ENCODE measurements at regions of chr3 and their contacts with region 1.

Region 1: DNA sequence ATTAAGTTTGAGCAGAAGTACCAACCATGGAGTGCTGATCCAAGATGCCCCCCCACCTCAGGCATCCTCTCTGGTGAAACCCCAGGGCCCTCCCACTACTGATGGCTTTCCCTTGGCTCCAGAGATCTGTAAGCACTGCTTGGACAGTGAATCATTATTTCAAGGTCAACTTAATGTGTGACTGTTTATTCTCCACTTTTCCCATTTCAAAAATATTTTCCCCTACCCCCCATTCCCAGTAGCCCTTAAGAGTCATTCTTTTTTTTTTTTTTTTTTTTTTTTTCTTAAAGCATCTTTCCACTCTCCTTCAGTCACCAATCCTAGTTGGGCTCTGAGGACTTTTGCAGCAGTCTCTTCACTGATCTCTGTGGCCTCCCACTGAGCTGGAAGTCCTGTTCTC is 82.6 kb downstream of the PCCB start:
- DNase-seq: no peak
- H3K4me3 ChIP-seq: no peak overlapping the region
- H3K27ac ChIP-seq: peak overlapping the region in 1 of 4 donors; percentile 3
- H3K4me1 ChIP-seq: peaks cover 0 to 4% (median 0%) of the 10 kb centered on the region in 4 donors
- H3K27me3 ChIP-seq: no peaks in the 10 kb centered on the region
- CTCF ChIP-seq: no peak
- EP300 ChIP-seq: no peak
- POLR2A ChIP-seq: no peak

Region 2: DNA sequence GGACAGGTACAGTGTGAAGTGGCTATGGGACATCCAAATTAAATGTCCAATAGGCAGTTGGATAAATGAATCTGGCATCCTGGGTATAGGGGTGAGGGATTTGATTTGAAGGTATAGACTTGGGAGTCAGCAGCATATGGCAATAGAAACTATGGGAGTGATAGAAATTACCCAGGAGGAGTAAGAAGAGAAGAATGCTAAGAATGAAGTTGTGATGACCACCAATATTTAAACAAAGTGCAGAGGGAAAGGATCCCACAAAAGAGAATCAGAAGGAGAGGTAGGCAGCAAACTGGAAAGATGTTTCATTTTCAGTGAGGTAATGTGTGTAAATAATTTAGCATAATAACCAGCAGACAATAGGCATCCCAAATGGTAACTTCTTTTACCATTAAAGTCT is 122.9 kb before region 1 on chr3:
- intact Hi-C with region 1: loop called (anchors 10 kb)
- DNase-seq: no peak
- H3K4me3 ChIP-seq: no peak overlapping the region
- H3K27ac ChIP-seq: no peak overlapping the region
- H3K4me1 ChIP-seq: no peaks in the 10 kb centered on the region
- H3K27me3 ChIP-seq: no peaks in the 10 kb centered on the region
- CTCF ChIP-seq: no peak
- EP300 ChIP-seq: no peak
- POLR2A ChIP-seq: no peak

Measured in esophagus muscularis mucosa (tissue), 4 donors.